ENCODE measurements at regions of chr1 and their contacts with region 1.

Region 1: DNA sequence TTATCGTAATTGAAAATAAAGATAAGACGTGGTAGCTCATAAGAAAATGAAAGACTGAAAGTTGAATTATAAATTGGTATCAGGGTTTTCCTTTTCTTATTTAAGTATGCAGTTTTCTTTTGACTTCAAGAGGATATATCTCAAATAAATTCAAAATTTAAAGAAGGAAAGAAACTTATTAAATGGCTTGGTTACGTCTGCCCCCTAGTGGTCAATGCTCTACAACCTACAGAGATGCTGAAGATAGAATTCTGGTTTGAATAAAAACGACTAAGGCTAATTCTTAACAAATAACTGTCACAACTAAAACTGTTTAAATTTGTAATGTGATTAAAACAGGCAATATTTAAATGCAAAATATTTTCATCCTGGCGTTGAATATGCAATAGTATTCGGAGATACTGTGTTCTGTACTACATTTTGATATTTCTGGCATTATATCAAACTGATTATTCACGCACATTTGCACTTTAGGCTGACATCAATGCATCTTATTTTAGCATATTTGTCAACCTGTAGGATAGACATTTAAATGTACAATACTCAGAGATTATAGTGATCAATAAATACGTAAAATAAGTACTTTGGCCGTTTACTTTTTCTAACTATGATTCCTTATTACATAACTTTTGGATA is 26.8 kb downstream of the IFI44 start:
- DNase-seq: peak; percentile 39
- ATAC-seq: peak; percentile 46; the same call in 2 of the 3 replicates
- H3K4me3 ChIP-seq: no peak overlapping the region
- H3K27ac ChIP-seq: no peak overlapping the region
- H3K4me1 ChIP-seq: no peaks in the 10 kb centered on the region
- H3K27me3 ChIP-seq: no peaks in the 10 kb centered on the region
- CTCF ChIP-seq: peak; percentile 60
- EP300 ChIP-seq: no peak
- POLR2A ChIP-seq: no peak
- RAD21 ChIP-seq: no peak

Region 2: GRCh38 chr1:78126506-78126905 is 550.0 kb before region 1 on chr1:
- CTCF ChIA-PET with region 1: interaction called, 6 read pairs
- POLR2A ChIA-PET with region 1: no interaction called
- in situ Hi-C with region 1: loop called (anchors 10 kb)
- intact Hi-C with region 1: loop called (anchors 1 kb)
- DNase-seq: no peak
- ATAC-seq: no peak
- H3K4me3 ChIP-seq: no peak overlapping the region
- H3K27ac ChIP-seq: no peak overlapping the region
- H3K4me1 ChIP-seq: no peaks in the 10 kb centered on the region
- H3K27me3 ChIP-seq: no peaks in the 10 kb centered on the region
- CTCF ChIP-seq: no peak
- EP300 ChIP-seq: no peak
- POLR2A ChIP-seq: no peak
- RAD21 ChIP-seq: no peak

Region 3: GRCh38 chr1:78132174-78132947 is 544.1 kb before region 1 on chr1:
- CTCF ChIA-PET with region 1: interaction called, 6 read pairs
- POLR2A ChIA-PET with region 1: no interaction called
- in situ Hi-C with region 1: loop called (anchors 10 kb)
- intact Hi-C with region 1: loop called (anchors 1 kb)
- DNase-seq: no peak
- ATAC-seq: no peak
- H3K4me3 ChIP-seq: no peak overlapping the region
- H3K27ac ChIP-seq: no peak overlapping the region
- H3K4me1 ChIP-seq: no peaks in the 10 kb centered on the region
- H3K27me3 ChIP-seq: no peaks in the 10 kb centered on the region
- CTCF ChIP-seq: no peak
- EP300 ChIP-seq: no peak
- POLR2A ChIP-seq: no peak
- RAD21 ChIP-seq: no peak

Region 4: GRCh38 chr1:78145105-78145580 is 531.3 kb before region 1 on chr1:
- CTCF ChIA-PET with region 1: interaction called, 7 read pairs
- POLR2A ChIA-PET with region 1: no interaction called
- in situ Hi-C with region 1: no loop called
- intact Hi-C with region 1: loop called (anchors 1 kb)
- DNase-seq: peak; percentile 56
- ATAC-seq: peak; percentile 85
- H3K4me3 ChIP-seq: no peak overlapping the region
- H3K27ac ChIP-seq: no peak overlapping the region
- H3K4me1 ChIP-seq: peaks cover 18% of the 10 kb centered on the region
- H3K27me3 ChIP-seq: no peaks in the 10 kb centered on the region
- CTCF ChIP-seq: peak; percentile 83
- EP300 ChIP-seq: no peak
- POLR2A ChIP-seq: no peak
- RAD21 ChIP-seq: peak; percentile 54

Region 5: DNA sequence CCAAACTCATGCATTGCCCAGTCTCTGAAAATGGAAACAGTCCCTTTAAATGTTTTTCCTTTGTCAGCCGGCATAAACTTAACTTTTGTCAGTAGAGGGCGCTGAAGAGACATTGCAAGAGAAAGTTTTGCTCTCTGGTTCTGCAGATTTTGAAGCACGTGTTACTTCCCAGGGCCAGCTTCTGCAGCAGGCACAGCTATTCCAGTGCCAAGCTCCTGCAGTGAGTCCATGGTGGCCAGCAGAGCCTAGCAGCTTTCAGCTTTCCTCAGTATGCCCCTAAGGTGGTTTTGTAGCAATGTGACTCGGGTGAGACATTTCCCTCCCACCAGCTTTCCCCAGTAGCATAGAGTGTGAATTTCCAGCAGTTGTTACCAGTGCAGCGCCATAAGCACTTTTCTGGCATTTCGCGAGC is 58.8 kb before region 1 on chr1:
- CTCF ChIA-PET with region 1: interaction called, 17 read pairs
- POLR2A ChIA-PET with region 1: no interaction called
- in situ Hi-C with region 1: no loop called
- intact Hi-C with region 1: loop called (anchors 1 kb)
- DNase-seq: peak; percentile 78
- ATAC-seq: peak; percentile 91
- H3K4me3 ChIP-seq: no peak overlapping the region
- H3K27ac ChIP-seq: no peak overlapping the region
- H3K4me1 ChIP-seq: no peaks in the 10 kb centered on the region
- H3K27me3 ChIP-seq: no peaks in the 10 kb centered on the region
- CTCF ChIP-seq: peak; percentile 77
- EP300 ChIP-seq: no peak
- POLR2A ChIP-seq: no peak
- RAD21 ChIP-seq: no peak

Measured in HepG2 (cell line).